ENCODE measurements at regions of chr12 and their contacts with region 1.

Region 1: GRCh38 chr12:442235-442884 is 17.4 kb upstream of the B4GALNT3 start:
- DNase-seq: no peak

Region 2: DNA sequence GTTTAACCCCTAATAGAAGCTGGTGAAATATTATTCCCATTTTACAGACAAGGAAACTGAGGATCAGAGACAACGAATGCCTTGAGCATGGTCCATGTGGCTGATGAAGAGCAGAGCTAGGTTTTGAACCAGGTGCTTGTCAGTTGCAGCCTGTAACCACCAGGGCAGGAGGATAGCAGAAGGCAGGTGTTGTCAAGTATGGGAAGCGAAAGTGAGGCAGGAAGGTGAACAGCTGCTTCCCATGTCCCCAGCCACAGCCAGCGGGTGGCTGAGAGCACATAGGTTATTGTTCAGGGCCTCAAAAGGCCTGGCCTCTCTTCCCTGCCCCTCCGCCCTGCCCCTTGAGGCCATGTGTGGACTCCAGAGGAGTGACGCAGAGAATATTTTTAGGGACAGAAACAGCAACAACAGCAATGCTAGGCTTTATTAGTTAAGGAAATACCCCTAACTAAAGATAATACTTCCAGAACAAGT is 336.2 kb before region 1 on chr12:
- intact Hi-C with region 1: loop called in 1 of 2 experiments (anchors 5 kb)
- DNase-seq: no peak

Region 3: GRCh38 chr12:389139-390096 is 52.9 kb before region 1 on chr12 and contains the start of gene KDM5A:
- intact Hi-C with region 1: no loop called
- DNase-seq: peak; percentile 97
- total RNA-seq, gene KDM5A: 48.1 to 50.1 TPM

Measured in posterior vena cava (tissue), 2 donors.